CD14-positive monocyte (primary cell): ENCODE measurements at regions of chr5 and their contacts with region 1.

Region 1: GRCh38 chr5:69217548-69218526 is 16.8 kb upstream of the CDK7 start:
- DNase-seq: peak; percentile 92 to 96 (median 93)
- H3K4me3 ChIP-seq: peak overlapping the region; percentile 86 to 98 (median 96)
- H3K4me3 Mint-ChIP-seq: peak overlapping the region; percentile 98 to 100
- H3K27ac ChIP-seq: peak overlapping the region; percentile 87
- H3K27ac Mint-ChIP-seq: peak overlapping the region; percentile 98 to 99 (median 98)
- H3K4me1 ChIP-seq: peaks cover 4 to 19% of the 10 kb centered on the region in 2 donors
- H3K4me1 Mint-ChIP-seq: peaks cover 11% of the 10 kb centered on the region
- H3K27me3 ChIP-seq: no peaks in the 10 kb centered on the region
- H3K27me3 Mint-ChIP-seq: peaks cover 0 to 3% (median 0%) of the 10 kb centered on the region in 3 donors
- CTCF ChIP-seq: peak; percentile 20

Region 2: GRCh38 chr5:69042915-69043658 is 174.8 kb before region 1 on chr5:
- intact Hi-C with region 1: no loop called
- DNase-seq: peak; percentile 79 to 84 (median 83)
- H3K4me3 ChIP-seq: peak overlapping the region; percentile 49 to 97 (median 79)
- H3K4me3 Mint-ChIP-seq: peak overlapping the region; percentile 76 to 93
- H3K27ac ChIP-seq: peak overlapping the region in 1 of 2 donors; percentile 63
- H3K27ac Mint-ChIP-seq: peak overlapping the region in 4 of 7 donors; percentile 50 to 76 (median 62)
- H3K4me1 ChIP-seq: peaks cover 6% of the 10 kb centered on the region in 2 donors
- H3K4me1 Mint-ChIP-seq: peaks cover 5% of the 10 kb centered on the region
- H3K27me3 ChIP-seq: no peaks in the 10 kb centered on the region
- H3K27me3 Mint-ChIP-seq: peaks cover 0 to 5% (median 1%) of the 10 kb centered on the region in 3 donors
- CTCF ChIP-seq: peak; percentile 92

Region 3: GRCh38 chr5:69152731-69153130 is 65.1 kb before region 1 on chr5:
- intact Hi-C with region 1: no loop called
- DNase-seq: peak; percentile 16 to 30 (median 21)
- H3K4me3 ChIP-seq: no peak overlapping the region
- H3K4me3 Mint-ChIP-seq: no peak overlapping the region
- H3K27ac ChIP-seq: no peak overlapping the region
- H3K27ac Mint-ChIP-seq: peak overlapping the region in 5 of 7 donors; percentile 1 to 63 (median 11)
- H3K4me1 ChIP-seq: peaks cover 0 to 4% of the 10 kb centered on the region in 2 donors
- H3K4me1 Mint-ChIP-seq: peaks cover 8% of the 10 kb centered on the region
- H3K27me3 ChIP-seq: no peaks in the 10 kb centered on the region
- H3K27me3 Mint-ChIP-seq: peaks cover 1 to 2% (median 1%) of the 10 kb centered on the region in 3 donors
- CTCF ChIP-seq: no peak

Region 4: GRCh38 chr5:69189162-69190086 is 28.4 kb before region 1 on chr5 and contains the start of gene CENPH:
- intact Hi-C with region 1: loop called in 1 of 2 experiments (anchors 2 kb)
- DNase-seq: peak; percentile 78 to 81 (median 79)
- H3K4me3 ChIP-seq: peak within 1 kb of the TSS; percentile 84 to 99 (median 88)
- H3K4me3 Mint-ChIP-seq: peak within 1 kb of the TSS; percentile 93 to 97
- H3K27ac ChIP-seq: peak within 1 kb of the TSS; percentile 57 to 89
- H3K27ac Mint-ChIP-seq: peak within 1 kb of the TSS; percentile 88 to 97 (median 95)
- H3K4me1 ChIP-seq: peaks cover 12 to 17% of the 10 kb centered on the region in 2 donors
- H3K4me1 Mint-ChIP-seq: peaks cover 14% of the 10 kb centered on the region
- H3K27me3 ChIP-seq: no peaks in the 10 kb centered on the region
- H3K27me3 Mint-ChIP-seq: peaks cover 0 to 2% (median 0%) of the 10 kb centered on the region in 3 donors
- CTCF ChIP-seq: no peak
- polyA plus RNA-seq, gene CENPH: 0.57 to 0.73 (median 0.61) TPM

Region 5: GRCh38 chr5:69369369-69370121 is 151.7 kb after region 1 on chr5 and contains the starts of genes AK6, RAD17 and TAF9:
- intact Hi-C with region 1: loop called in 1 of 2 experiments (anchors 5 kb)
- DNase-seq: peak; percentile 83 to 89 (median 85)
- H3K4me3 ChIP-seq: peak within 1 kb of the TSS; percentile 77 to 97 (median 86)
- H3K4me3 Mint-ChIP-seq: peak within 1 kb of the TSS; percentile 96 to 97
- H3K27ac ChIP-seq: peak within 1 kb of the TSS; percentile 56 to 99
- H3K27ac Mint-ChIP-seq: peak within 1 kb of the TSS; percentile 93 to 99 (median 98)
- H3K4me1 ChIP-seq: peaks cover 18 to 26% of the 10 kb centered on the region in 2 donors
- H3K4me1 Mint-ChIP-seq: peaks cover 23% of the 10 kb centered on the region
- H3K27me3 ChIP-seq: no peaks in the 10 kb centered on the region
- H3K27me3 Mint-ChIP-seq: no peaks in the 10 kb centered on the region
- CTCF ChIP-seq: no peak
- polyA plus RNA-seq, gene AK6: 7.6 to 50.3 (median 30.6) TPM
- polyA plus RNA-seq, gene RAD17: 9.1 to 11.6 (median 9.6) TPM
- polyA plus RNA-seq, gene TAF9: 50.2 to 156 (median 143) TPM